ENCODE measurements at regions of chr20 and their contacts with region 1.

Region 1: GRCh38 chr20:49484180-49485140 is 2.0 kb upstream of the KCNB1 start:
- DNase-seq: peak; percentile 67
- H3K4me3 ChIP-seq: peak overlapping the region in 2 of 3 experiments; percentile 6 to 7
- H3K27ac ChIP-seq: no peak overlapping the region
- H3K4me1 ChIP-seq: no peaks in the 10 kb centered on the region
- H3K27me3 ChIP-seq: peaks cover 16 to 19% of the 10 kb centered on the region in 2 experiments
- CTCF ChIP-seq: peak; percentile 66 to 87
- POLR2A ChIP-seq: no peak

Region 2: DNA sequence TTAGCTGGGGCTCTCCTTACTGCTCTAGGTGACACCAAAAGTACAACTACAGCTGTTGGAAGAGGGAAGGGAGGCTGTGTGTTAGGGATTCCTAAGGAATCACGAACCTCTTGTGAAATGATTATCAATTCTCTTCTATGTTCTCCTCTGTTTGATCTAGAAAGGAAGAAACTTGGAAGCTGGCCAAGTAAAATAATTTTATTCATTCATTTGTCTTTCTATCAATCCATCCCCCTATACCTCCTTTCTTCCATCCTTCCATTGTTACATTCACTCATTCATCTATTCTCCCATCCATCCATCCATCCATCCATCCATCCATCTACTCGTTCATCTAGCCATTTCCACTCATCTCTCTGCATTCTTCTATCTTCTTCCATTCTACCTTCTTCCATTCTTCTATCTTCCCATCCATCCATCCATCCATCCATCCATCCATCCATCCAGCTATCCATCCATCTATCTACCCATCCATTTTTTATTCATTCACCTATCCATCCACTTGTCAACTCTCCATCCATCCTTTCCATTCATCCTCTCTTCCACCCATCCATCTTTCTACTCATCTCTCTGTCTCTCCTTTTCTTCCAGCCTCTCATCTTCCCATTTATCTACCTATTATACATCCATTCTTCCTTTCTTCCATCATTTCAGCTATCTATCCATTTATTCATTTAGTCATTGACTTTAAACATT is 153.8 kb before region 1 on chr20:
- CTCF ChIA-PET with region 1: interaction called, 62 read pairs
- POLR2A ChIA-PET with region 1: interaction called, 6 read pairs
- dilution Hi-C with region 1: no loop called
- intact Hi-C with region 1: loop called (anchors 1 kb)
- DNase-seq: no peak
- H3K4me3 ChIP-seq: no peak overlapping the region
- H3K27ac ChIP-seq: no peak overlapping the region
- H3K4me1 ChIP-seq: peaks cover 3% of the 10 kb centered on the region
- H3K27me3 ChIP-seq: peaks cover 10 to 25% of the 10 kb centered on the region in 2 experiments
- CTCF ChIP-seq: no peak
- POLR2A ChIP-seq: no peak

Region 3: DNA sequence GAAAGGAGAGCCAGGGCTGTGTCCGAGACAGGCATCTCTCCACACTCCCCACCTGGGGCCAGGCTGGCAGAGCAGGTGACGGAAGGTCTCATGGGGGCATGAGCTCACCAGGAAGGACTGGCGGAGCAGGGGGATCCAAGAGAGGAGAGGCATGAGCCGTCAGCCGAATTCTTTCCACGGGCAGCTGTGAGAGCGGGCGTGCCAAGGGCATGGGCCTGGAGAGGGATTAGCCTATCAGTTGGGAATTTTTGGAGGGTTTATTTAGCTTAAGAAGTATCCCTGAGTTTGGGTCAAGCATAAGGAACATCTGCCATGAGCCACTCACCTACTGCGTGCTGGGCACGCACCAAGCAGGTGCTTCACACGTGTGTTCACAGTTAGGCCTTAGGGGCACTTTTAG is 146.4 kb before region 1 on chr20:
- CTCF ChIA-PET with region 1: interaction called, 62 read pairs
- POLR2A ChIA-PET with region 1: no interaction called
- dilution Hi-C with region 1: no loop called
- intact Hi-C with region 1: loop called (anchors 1 kb)
- DNase-seq: no peak
- H3K4me3 ChIP-seq: no peak overlapping the region
- H3K27ac ChIP-seq: no peak overlapping the region
- H3K4me1 ChIP-seq: no peaks in the 10 kb centered on the region
- H3K27me3 ChIP-seq: peaks cover 0 to 2% of the 10 kb centered on the region in 2 experiments
- CTCF ChIP-seq: no peak
- POLR2A ChIP-seq: no peak

Region 4: GRCh38 chr20:49384437-49385088 is 99.9 kb before region 1 on chr20:
- CTCF ChIA-PET with region 1: interaction called, 93 read pairs
- POLR2A ChIA-PET with region 1: no interaction called
- dilution Hi-C with region 1: no loop called
- intact Hi-C with region 1: loop called (anchors 1 kb)
- DNase-seq: peak; percentile 56
- H3K4me3 ChIP-seq: no peak overlapping the region
- H3K27ac ChIP-seq: no peak overlapping the region
- H3K4me1 ChIP-seq: no peaks in the 10 kb centered on the region
- H3K27me3 ChIP-seq: peaks cover 0 to 3% of the 10 kb centered on the region in 2 experiments
- CTCF ChIP-seq: peak; percentile 83 to 84
- POLR2A ChIP-seq: no peak

Region 5: DNA sequence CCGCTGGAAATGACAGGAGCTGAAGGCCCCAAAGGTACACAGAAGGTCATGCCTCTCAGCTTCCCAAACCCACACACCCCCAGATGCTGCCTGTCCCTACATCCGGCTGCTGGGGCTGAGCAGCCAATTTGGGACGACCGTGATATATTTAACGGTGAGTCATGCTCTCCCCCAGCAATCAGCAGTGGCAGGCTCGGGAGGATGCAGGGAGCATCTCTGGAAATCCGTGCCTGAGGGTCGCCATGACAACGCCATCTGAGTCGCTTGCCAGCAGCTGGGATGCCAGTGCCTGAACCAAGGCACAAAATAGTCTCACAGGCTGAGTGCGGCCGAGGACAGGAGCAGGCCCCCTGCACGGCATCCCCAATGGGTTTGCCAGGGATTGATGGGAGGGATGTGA is 59.9 kb before region 1 on chr20:
- CTCF ChIA-PET with region 1: interaction called, 12 read pairs
- POLR2A ChIA-PET with region 1: no interaction called
- dilution Hi-C with region 1: no loop called
- intact Hi-C with region 1: no loop called
- DNase-seq: no peak
- H3K4me3 ChIP-seq: no peak overlapping the region
- H3K27ac ChIP-seq: no peak overlapping the region
- H3K4me1 ChIP-seq: no peaks in the 10 kb centered on the region
- H3K27me3 ChIP-seq: peaks cover 9 to 21% of the 10 kb centered on the region in 2 experiments
- CTCF ChIP-seq: no peak
- POLR2A ChIP-seq: no peak

Region 6: DNA sequence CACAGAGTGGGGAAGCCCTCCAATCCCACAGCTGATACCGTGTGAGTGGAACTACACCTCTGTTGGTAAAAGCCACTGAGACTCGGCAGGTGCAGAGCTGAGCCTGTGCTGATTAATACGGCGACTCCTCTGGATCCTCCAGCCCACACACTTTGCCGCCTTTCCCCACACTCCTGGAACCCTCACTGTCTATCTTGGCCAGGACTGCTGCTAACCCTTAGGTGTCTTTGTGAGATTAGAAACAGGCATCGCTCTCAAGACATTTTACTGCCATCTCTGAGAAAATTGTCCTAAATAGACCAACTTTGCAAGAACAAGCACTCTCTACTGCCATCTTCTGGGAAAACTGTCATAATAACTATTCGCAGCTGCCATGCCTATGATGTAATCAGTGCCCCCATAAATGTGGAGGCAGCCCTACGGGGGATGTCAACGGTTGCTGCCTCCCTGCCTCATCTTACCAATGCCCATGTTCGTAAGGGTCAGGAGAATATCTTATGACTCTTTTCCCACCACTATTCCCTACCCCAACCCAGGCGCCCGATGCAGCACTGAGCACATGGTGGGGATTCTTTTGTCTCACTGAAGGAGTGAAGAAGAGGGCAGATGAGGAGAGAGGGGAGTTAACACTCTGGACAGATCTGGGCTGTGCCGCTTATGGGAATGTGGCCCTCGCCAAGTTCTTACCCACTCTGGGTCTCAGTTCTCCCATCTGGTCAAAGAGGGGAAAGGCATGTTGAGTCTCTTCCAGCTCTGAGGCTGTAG is 24.2 kb after region 1 on chr20:
- CTCF ChIA-PET with region 1: interaction called, 32 read pairs
- POLR2A ChIA-PET with region 1: no interaction called
- dilution Hi-C with region 1: no loop called
- intact Hi-C with region 1: no loop called
- DNase-seq: peak; percentile 44
- H3K4me3 ChIP-seq: no peak overlapping the region
- H3K27ac ChIP-seq: no peak overlapping the region
- H3K4me1 ChIP-seq: no peaks in the 10 kb centered on the region
- H3K27me3 ChIP-seq: peaks cover 4 to 8% of the 10 kb centered on the region in 2 experiments
- CTCF ChIP-seq: peak; percentile 35 to 46
- POLR2A ChIP-seq: no peak

Region 7: GRCh38 chr20:49534255-49534712 is 49.8 kb after region 1 on chr20:
- CTCF ChIA-PET with region 1: interaction called, 4 read pairs
- POLR2A ChIA-PET with region 1: no interaction called
- dilution Hi-C with region 1: no loop called
- intact Hi-C with region 1: loop called (anchors 1 kb)
- DNase-seq: peak; percentile 60
- H3K4me3 ChIP-seq: no peak overlapping the region
- H3K27ac ChIP-seq: no peak overlapping the region
- H3K4me1 ChIP-seq: no peaks in the 10 kb centered on the region
- H3K27me3 ChIP-seq: peaks cover 0 to 2% of the 10 kb centered on the region in 2 experiments
- CTCF ChIP-seq: peak; percentile 71
- POLR2A ChIP-seq: no peak